Aorta (tissue), 5 donors: ENCODE measurements at regions of chr15 and their contacts with region 1.

Region 1: GRCh38 chr15:58182460-58183163 is 44.4 kb downstream of the AQP9 start:
- DNase-seq: peak; percentile 60 to 79
- ATAC-seq: peak; percentile 79
- H3K4me3 ChIP-seq: no peak overlapping the region
- H3K27ac ChIP-seq: no peak overlapping the region
- H3K4me1 ChIP-seq: no peaks in the 10 kb centered on the region
- H3K27me3 ChIP-seq: no peaks in the 10 kb centered on the region

Region 2: DNA sequence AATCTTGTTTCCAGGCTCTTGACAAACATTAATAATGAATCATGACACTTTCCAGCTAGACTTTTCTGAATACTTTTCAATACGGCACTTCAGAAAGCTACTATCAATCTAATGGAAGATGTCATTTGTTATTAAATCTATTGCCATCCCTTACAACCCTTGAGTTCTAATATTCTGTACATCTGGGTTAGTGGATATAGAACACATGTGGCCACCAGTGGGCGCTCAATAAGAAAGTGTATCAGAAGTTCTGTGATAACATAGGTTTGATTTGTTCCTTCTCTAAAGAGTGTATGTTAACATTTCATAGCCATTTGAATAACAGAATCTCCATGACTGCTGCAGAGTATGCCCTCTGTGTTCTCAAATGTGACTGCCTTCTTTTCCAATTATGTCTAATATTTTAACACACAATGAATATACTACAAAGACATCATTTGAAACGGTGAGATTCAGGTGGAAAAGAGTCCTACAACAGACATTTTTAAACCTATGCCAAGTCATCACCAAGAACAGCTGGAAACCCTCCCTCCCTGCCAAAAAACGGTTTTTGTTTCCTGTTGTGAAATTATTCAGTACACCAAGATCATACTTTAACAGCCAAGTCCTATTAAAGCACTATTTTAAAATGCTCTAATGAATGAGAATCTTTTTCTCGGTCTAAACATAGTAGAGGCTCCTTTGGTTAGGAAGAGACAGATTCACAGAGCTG is 139.3 kb before region 1 on chr15:
- intact Hi-C with region 1: loop called in 1 of 2 experiments (anchors 10 kb)
- DNase-seq: peak in 1 of 2 donors; percentile 59
- ATAC-seq: no peak
- H3K4me3 ChIP-seq: no peak overlapping the region
- H3K27ac ChIP-seq: no peak overlapping the region
- H3K4me1 ChIP-seq: no peaks in the 10 kb centered on the region
- H3K27me3 ChIP-seq: no peaks in the 10 kb centered on the region

Region 3: GRCh38 chr15:58307313-58307961 is 124.8 kb after region 1 on chr15:
- intact Hi-C with region 1: no loop called
- DNase-seq: no peak
- ATAC-seq: no peak
- H3K4me3 ChIP-seq: no peak overlapping the region
- H3K27ac ChIP-seq: no peak overlapping the region
- H3K4me1 ChIP-seq: no peaks in the 10 kb centered on the region
- H3K27me3 ChIP-seq: no peaks in the 10 kb centered on the region